Pancreas (tissue), 10 donors: ENCODE measurements at regions of chr5 and their contacts with region 1.

Region 1: GRCh38 chr5:164504141-164504772 is 998.8 kb downstream of the MAT2B start:
- DNase-seq: peak in 2 of 6 donors; percentile 17 to 51
- ATAC-seq: peak in 3 of 4 donors; percentile 67 to 81 (median 79)
- H3K4me3 ChIP-seq: no peak overlapping the region
- H3K27ac ChIP-seq: no peak overlapping the region
- H3K4me1 ChIP-seq: peaks cover 0 to 7% (median 0%) of the 10 kb centered on the region in 3 donors
- H3K27me3 ChIP-seq: no peaks in the 10 kb centered on the region
- CTCF ChIP-seq: peak; percentile 45 to 82 (median 70)

Region 2: GRCh38 chr5:163564321-163564938 is 939.8 kb before region 1 on chr5:
- intact Hi-C with region 1: loop called in 2 of 3 experiments (anchors 10 kb)
- DNase-seq: peak in 4 of 6 donors; percentile 21 to 76 (median 31)
- ATAC-seq: peak; percentile 55 to 83 (median 81)
- H3K4me3 ChIP-seq: no peak overlapping the region
- H3K27ac ChIP-seq: no peak overlapping the region
- H3K4me1 ChIP-seq: peaks cover 0 to 10% (median 6%) of the 10 kb centered on the region in 3 donors
- H3K27me3 ChIP-seq: no peaks in the 10 kb centered on the region
- CTCF ChIP-seq: peak; percentile 54 to 84 (median 70)

Region 3: GRCh38 chr5:164013077-164013670 is 491.1 kb before region 1 on chr5:
- intact Hi-C with region 1: loop called in 1 of 3 experiments (anchors 10 kb)
- DNase-seq: peak in 3 of 6 donors; percentile 43 to 66 (median 43)
- ATAC-seq: peak; percentile 50 to 85 (median 84)
- H3K4me3 ChIP-seq: no peak overlapping the region
- H3K27ac ChIP-seq: no peak overlapping the region
- H3K4me1 ChIP-seq: no peaks in the 10 kb centered on the region
- H3K27me3 ChIP-seq: no peaks in the 10 kb centered on the region
- CTCF ChIP-seq: peak; percentile 24 to 62 (median 48)

Region 4: DNA sequence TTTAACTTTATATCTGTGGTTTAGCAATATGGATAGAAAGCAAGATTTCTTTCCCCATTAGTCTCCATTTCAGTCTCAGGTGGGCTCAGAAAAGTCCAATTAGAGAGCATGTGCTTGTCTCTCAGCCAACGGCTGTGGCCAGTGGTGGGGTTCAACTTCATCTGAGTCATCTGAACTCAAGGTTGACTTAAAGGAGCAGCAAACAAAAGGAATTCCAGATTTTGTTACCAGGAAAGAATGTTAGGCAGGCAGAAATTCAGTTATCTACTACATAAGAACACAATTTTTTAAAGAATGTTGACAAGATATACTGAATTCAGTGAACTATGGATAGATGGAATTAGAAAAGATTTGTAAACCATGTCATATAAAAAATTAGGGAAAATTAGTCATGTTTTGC is 214.7 kb before region 1 on chr5:
- intact Hi-C with region 1: no loop called
- DNase-seq: no peak
- ATAC-seq: no peak
- H3K4me3 ChIP-seq: no peak overlapping the region
- H3K27ac ChIP-seq: no peak overlapping the region
- H3K4me1 ChIP-seq: no peaks in the 10 kb centered on the region
- H3K27me3 ChIP-seq: no peaks in the 10 kb centered on the region
- CTCF ChIP-seq: no peak